Prostate gland (tissue), 2 donors: ENCODE measurements at regions of chr20 and their contacts with region 1.

Region 1: DNA sequence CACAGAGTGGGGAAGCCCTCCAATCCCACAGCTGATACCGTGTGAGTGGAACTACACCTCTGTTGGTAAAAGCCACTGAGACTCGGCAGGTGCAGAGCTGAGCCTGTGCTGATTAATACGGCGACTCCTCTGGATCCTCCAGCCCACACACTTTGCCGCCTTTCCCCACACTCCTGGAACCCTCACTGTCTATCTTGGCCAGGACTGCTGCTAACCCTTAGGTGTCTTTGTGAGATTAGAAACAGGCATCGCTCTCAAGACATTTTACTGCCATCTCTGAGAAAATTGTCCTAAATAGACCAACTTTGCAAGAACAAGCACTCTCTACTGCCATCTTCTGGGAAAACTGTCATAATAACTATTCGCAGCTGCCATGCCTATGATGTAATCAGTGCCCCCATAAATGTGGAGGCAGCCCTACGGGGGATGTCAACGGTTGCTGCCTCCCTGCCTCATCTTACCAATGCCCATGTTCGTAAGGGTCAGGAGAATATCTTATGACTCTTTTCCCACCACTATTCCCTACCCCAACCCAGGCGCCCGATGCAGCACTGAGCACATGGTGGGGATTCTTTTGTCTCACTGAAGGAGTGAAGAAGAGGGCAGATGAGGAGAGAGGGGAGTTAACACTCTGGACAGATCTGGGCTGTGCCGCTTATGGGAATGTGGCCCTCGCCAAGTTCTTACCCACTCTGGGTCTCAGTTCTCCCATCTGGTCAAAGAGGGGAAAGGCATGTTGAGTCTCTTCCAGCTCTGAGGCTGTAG is 26.1 kb upstream of the KCNB1 start:
- DNase-seq: no peak
- H3K4me3 ChIP-seq: no peak overlapping the region
- H3K27ac ChIP-seq: peak overlapping the region in 1 of 2 donors; percentile 6
- H3K4me1 ChIP-seq: peaks cover 6% of the 10 kb centered on the region
- H3K27me3 ChIP-seq: no peaks in the 10 kb centered on the region
- CTCF ChIP-seq: peak in 3 of 4 experiments; percentile 50 to 59 (median 59)
- POLR2A ChIP-seq: no peak

Region 2: DNA sequence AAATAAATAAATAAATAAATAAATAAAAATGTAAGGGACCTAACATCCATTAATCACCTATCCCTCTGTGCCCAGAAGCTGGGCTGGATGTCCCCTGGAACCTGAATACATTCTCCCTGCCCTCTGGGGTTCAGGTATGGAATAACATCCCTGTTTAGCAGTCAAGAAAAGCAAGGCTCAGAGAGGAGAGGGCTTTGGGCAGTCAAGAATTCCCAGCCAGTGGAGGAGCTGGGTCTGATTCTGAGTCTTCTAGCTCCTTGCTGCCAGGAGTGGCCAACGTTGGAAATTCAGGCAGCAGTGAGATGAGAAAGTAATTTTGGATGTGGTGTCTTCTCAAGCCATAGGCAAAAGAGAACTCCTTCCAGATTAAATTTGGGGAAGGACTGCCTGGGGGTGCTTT is 188.2 kb before region 1 on chr20:
- intact Hi-C with region 1: no loop called
- DNase-seq: no peak
- H3K4me3 ChIP-seq: no peak overlapping the region
- H3K27ac ChIP-seq: no peak overlapping the region
- H3K4me1 ChIP-seq: no peaks in the 10 kb centered on the region
- H3K27me3 ChIP-seq: no peaks in the 10 kb centered on the region
- CTCF ChIP-seq: peak in 2 of 4 experiments; percentile 28 to 44
- POLR2A ChIP-seq: no peak

Region 3: DNA sequence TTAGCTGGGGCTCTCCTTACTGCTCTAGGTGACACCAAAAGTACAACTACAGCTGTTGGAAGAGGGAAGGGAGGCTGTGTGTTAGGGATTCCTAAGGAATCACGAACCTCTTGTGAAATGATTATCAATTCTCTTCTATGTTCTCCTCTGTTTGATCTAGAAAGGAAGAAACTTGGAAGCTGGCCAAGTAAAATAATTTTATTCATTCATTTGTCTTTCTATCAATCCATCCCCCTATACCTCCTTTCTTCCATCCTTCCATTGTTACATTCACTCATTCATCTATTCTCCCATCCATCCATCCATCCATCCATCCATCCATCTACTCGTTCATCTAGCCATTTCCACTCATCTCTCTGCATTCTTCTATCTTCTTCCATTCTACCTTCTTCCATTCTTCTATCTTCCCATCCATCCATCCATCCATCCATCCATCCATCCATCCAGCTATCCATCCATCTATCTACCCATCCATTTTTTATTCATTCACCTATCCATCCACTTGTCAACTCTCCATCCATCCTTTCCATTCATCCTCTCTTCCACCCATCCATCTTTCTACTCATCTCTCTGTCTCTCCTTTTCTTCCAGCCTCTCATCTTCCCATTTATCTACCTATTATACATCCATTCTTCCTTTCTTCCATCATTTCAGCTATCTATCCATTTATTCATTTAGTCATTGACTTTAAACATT is 177.9 kb before region 1 on chr20:
- intact Hi-C with region 1: loop called (anchors 5 kb)
- DNase-seq: no peak
- H3K4me3 ChIP-seq: no peak overlapping the region
- H3K27ac ChIP-seq: no peak overlapping the region
- H3K4me1 ChIP-seq: no peaks in the 10 kb centered on the region
- H3K27me3 ChIP-seq: no peaks in the 10 kb centered on the region
- CTCF ChIP-seq: no peak
- POLR2A ChIP-seq: no peak

Region 4: DNA sequence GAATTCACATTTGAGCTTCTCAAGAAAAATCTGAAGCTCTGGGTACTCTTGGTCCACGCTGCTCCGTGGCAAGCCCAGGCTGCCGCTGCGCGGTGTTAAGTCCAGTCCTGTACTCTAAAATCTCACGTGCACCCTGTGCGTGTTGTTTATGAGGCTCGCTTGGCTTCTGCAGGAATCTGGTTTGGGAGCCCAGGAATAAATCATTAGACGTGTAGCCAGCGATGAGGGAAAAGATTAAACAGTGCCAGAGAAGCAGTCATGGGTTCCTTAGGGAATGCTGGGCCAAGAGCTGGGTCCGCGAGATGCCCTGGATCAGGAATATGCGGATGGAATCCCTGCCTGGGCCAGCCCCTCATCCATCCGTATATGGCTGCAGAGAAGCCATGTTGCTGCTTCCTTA is 113.4 kb before region 1 on chr20:
- intact Hi-C with region 1: loop called (anchors 5 kb)
- DNase-seq: peak; percentile 55
- H3K4me3 ChIP-seq: no peak overlapping the region
- H3K27ac ChIP-seq: peak overlapping the region; percentile 54 to 64
- H3K4me1 ChIP-seq: no peaks in the 10 kb centered on the region
- H3K27me3 ChIP-seq: no peaks in the 10 kb centered on the region
- CTCF ChIP-seq: no peak
- POLR2A ChIP-seq: no peak

Region 5: GRCh38 chr20:49460916-49461315 is 47.7 kb before region 1 on chr20:
- intact Hi-C with region 1: no loop called
- DNase-seq: no peak
- H3K4me3 ChIP-seq: no peak overlapping the region
- H3K27ac ChIP-seq: no peak overlapping the region
- H3K4me1 ChIP-seq: no peaks in the 10 kb centered on the region
- H3K27me3 ChIP-seq: no peaks in the 10 kb centered on the region
- CTCF ChIP-seq: no peak
- POLR2A ChIP-seq: no peak

Region 6: GRCh38 chr20:49562311-49563014 is 53.8 kb after region 1 on chr20:
- intact Hi-C with region 1: no loop called
- DNase-seq: peak; percentile 19
- H3K4me3 ChIP-seq: no peak overlapping the region
- H3K27ac ChIP-seq: peak overlapping the region; percentile 77 to 78
- H3K4me1 ChIP-seq: no peaks in the 10 kb centered on the region
- H3K27me3 ChIP-seq: no peaks in the 10 kb centered on the region
- CTCF ChIP-seq: no peak
- POLR2A ChIP-seq: no peak

Region 7: GRCh38 chr20:50460460-50461267 is 952.0 kb after region 1 on chr20:
- intact Hi-C with region 1: no loop called
- DNase-seq: peak; percentile 84
- H3K4me3 ChIP-seq: no peak overlapping the region
- H3K27ac ChIP-seq: peak overlapping the region; percentile 13 to 51
- H3K4me1 ChIP-seq: no peaks in the 10 kb centered on the region
- H3K27me3 ChIP-seq: no peaks in the 10 kb centered on the region
- CTCF ChIP-seq: peak; percentile 91 to 98 (median 96)
- POLR2A ChIP-seq: no peak